SK-N-SH (cell line): ENCODE measurements at regions of chr4 and their contacts with region 1.

Region 1: GRCh38 chr4:4480685-4481398 is 61.0 kb downstream of the STX18 start:
- DNase-seq: peak; percentile 45
- H3K4me3 ChIP-seq: no peak overlapping the region
- H3K27ac ChIP-seq: no peak overlapping the region
- H3K4me1 ChIP-seq: peaks cover 0 to 4% of the 10 kb centered on the region in 2 experiments; a peak in 1 of 4 replicates
- H3K27me3 ChIP-seq: no peaks in the 10 kb centered on the region
- CTCF ChIP-seq: peak; percentile 69
- EP300 ChIP-seq: no peak
- RAD21 ChIP-seq: peak; percentile 61

Region 2: DNA sequence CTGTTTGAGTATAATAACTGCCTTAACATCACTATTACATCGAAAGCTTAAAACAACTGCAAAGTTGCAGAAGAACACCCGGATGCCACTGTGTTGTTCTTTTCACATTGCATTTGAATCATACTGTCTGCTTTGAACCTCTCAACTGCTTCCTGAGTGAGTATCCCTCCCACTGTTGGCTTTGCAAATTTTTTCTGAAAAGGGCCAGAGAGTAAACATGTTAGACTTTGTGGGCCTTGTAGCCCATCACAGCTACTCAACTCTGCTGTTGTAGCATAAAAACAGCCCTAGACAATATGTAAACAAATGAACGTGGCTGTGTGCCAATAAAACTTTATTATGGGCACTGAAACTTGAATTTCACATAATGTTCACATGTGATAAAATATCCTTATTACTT is 17.9 kb before region 1 on chr4:
- CTCF ChIA-PET with region 1: interaction called, 11 read pairs
- POLR2A ChIA-PET with region 1: interaction called, 3 read pairs
- DNase-seq: no peak
- H3K4me3 ChIP-seq: no peak overlapping the region
- H3K27ac ChIP-seq: peak overlapping the region in 1 of 2 experiments; percentile 90; a peak in 1 of 4 replicates
- H3K4me1 ChIP-seq: peaks cover 3 to 20% of the 10 kb centered on the region in 2 experiments
- H3K27me3 ChIP-seq: no peaks in the 10 kb centered on the region
- CTCF ChIP-seq: no peak
- EP300 ChIP-seq: no peak
- RAD21 ChIP-seq: no peak